MCF 10A (cell line): ENCODE measurements at regions of chr17 and their contacts with region 1.

Region 1: GRCh38 chr17:82418001-82418986 is at the starts of genes HEXD and OGFOD3:
- DNase-seq: peak; percentile 78
- H3K4me3 Mint-ChIP-seq: peak within 1 kb of the TSS; percentile 71
- H3K27ac Mint-ChIP-seq: no peak within 1 kb of the TSS
- H3K4me1 Mint-ChIP-seq: no peaks in the 10 kb centered on the region
- H3K27me3 Mint-ChIP-seq: no peaks in the 10 kb centered on the region
- CTCF ChIP-seq: no peak
- total RNA-seq, gene HEXD: 14.8 and 16.2 TPM in 2 replicates
- total RNA-seq, gene OGFOD3: 16.5 and 21.1 TPM in 2 replicates

Region 2: GRCh38 chr17:82230627-82231311 is 187.5 kb before region 1 on chr17:
- CTCF ChIA-PET with region 1: no interaction called
- POLR2A ChIA-PET with region 1: no interaction called
- intact Hi-C with region 1: no loop called
- DNase-seq: peak; percentile 86
- H3K4me3 Mint-ChIP-seq: peak overlapping the region; percentile 84
- H3K27ac Mint-ChIP-seq: peak overlapping the region; percentile 72
- H3K4me1 Mint-ChIP-seq: no peaks in the 10 kb centered on the region
- H3K27me3 Mint-ChIP-seq: no peaks in the 10 kb centered on the region
- CTCF ChIP-seq: peak; percentile 47

Region 3: DNA sequence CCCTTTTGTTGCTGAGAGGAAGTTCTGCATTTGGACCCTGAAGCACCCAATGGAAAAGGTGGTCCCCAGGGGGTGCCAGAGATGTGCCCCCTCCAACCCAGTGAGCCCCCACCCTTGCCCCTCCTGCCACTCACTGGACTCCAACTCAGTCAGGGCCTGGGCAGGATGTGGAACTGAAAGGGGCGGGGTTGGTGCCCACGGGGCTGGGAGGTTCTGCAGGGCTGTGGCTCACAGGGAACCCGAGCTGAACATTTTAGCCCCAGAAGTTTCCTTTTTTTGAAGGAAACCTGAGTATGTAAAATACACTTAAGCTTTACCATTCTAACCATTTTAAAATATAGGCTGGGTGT is 15.9 kb after region 1 on chr17:
- CTCF ChIA-PET with region 1: no interaction called
- POLR2A ChIA-PET with region 1: no interaction called
- intact Hi-C with region 1: no loop called
- DNase-seq: no peak
- H3K4me3 Mint-ChIP-seq: no peak overlapping the region
- H3K27ac Mint-ChIP-seq: no peak overlapping the region
- H3K4me1 Mint-ChIP-seq: no peaks in the 10 kb centered on the region
- H3K27me3 Mint-ChIP-seq: no peaks in the 10 kb centered on the region
- CTCF ChIP-seq: no peak

Region 4: GRCh38 chr17:82457997-82458864 is 39.9 kb after region 1 on chr17 and contains the start of gene NARF:
- CTCF ChIA-PET with region 1: no interaction called
- POLR2A ChIA-PET with region 1: interaction called, 10 read pairs
- intact Hi-C with region 1: no loop called
- DNase-seq: peak; percentile 99
- H3K4me3 Mint-ChIP-seq: peak within 1 kb of the TSS; percentile 83
- H3K27ac Mint-ChIP-seq: peak within 1 kb of the TSS; percentile 90
- H3K4me1 Mint-ChIP-seq: peaks cover 12% of the 10 kb centered on the region
- H3K27me3 Mint-ChIP-seq: no peaks in the 10 kb centered on the region
- CTCF ChIP-seq: no peak
- total RNA-seq, gene NARF: 20.6 TPM in 2 replicates